Ovary (tissue), 10 donors: ENCODE measurements at regions of chr15 and their contacts with region 1.

Region 1: GRCh38 chr15:27817258-27817657 is 281.9 kb downstream of the OCA2 start:
- DNase-seq: no peak
- H3K4me3 ChIP-seq: no peak overlapping the region
- H3K27ac ChIP-seq: no peak overlapping the region
- H3K4me1 ChIP-seq: no peaks in the 10 kb centered on the region
- H3K27me3 ChIP-seq: no peaks in the 10 kb centered on the region
- CTCF ChIP-seq: no peak
- EP300 ChIP-seq: no peak
- POLR2A ChIP-seq: no peak

Region 2: GRCh38 chr15:27679731-27680471 is 137.4 kb before region 1 on chr15:
- intact Hi-C with region 1: no loop called
- DNase-seq: no peak
- H3K4me3 ChIP-seq: no peak overlapping the region
- H3K27ac ChIP-seq: no peak overlapping the region
- H3K4me1 ChIP-seq: no peaks in the 10 kb centered on the region
- H3K27me3 ChIP-seq: no peaks in the 10 kb centered on the region
- CTCF ChIP-seq: no peak
- EP300 ChIP-seq: no peak
- POLR2A ChIP-seq: no peak

Region 3: GRCh38 chr15:27797765-27798164 is 19.5 kb before region 1 on chr15:
- intact Hi-C with region 1: loop called in 1 of 4 experiments (anchors 2 kb)
- DNase-seq: no peak
- H3K4me3 ChIP-seq: no peak overlapping the region
- H3K27ac ChIP-seq: no peak overlapping the region
- H3K4me1 ChIP-seq: no peaks in the 10 kb centered on the region
- H3K27me3 ChIP-seq: no peaks in the 10 kb centered on the region
- CTCF ChIP-seq: no peak
- EP300 ChIP-seq: no peak
- POLR2A ChIP-seq: no peak